ENCODE measurements at regions of chr7 and their contacts with region 1.

Region 1: GRCh38 chr7:158824028-158824427 is 5.3 kb downstream of the ESYT2 start:
- DNase-seq: peak; percentile 67
- H3K4me3 Mint-ChIP-seq: peak overlapping the region; percentile 33
- H3K27ac Mint-ChIP-seq: peak overlapping the region; percentile 87
- H3K4me1 Mint-ChIP-seq: peaks cover 61% of the 10 kb centered on the region
- H3K27me3 Mint-ChIP-seq: no peaks in the 10 kb centered on the region

Region 2: DNA sequence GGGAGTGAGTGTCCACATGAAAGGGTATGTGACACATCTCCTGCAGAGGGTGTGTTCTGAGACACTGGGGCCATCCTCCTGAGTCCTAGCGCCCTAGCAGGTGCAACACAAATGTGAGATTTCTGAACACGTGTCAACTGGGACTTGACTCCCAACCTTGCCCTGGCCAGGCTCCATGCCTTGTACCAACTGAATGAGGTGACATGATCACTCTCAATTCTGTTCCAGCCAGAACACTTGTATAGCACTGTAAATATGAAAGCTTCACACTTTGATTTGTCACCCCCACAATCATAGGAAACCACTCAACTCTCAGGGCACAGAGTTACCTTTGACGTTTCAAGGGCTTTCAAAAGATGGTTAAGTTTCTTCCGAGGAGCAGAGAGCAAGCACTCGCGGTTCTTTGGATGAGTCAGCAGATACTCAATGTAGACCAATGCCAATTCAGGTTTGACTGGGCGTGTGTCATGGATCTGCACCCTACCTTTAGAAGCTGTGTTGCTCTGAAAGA is 168.0 kb before region 1 on chr7:
- intact Hi-C with region 1: loop called (anchors 5 kb)
- DNase-seq: peak; percentile 66
- H3K4me3 Mint-ChIP-seq: no peak overlapping the region
- H3K27ac Mint-ChIP-seq: peak overlapping the region; percentile 88
- H3K4me1 Mint-ChIP-seq: peaks cover 31% of the 10 kb centered on the region
- H3K27me3 Mint-ChIP-seq: no peaks in the 10 kb centered on the region

Region 3: DNA sequence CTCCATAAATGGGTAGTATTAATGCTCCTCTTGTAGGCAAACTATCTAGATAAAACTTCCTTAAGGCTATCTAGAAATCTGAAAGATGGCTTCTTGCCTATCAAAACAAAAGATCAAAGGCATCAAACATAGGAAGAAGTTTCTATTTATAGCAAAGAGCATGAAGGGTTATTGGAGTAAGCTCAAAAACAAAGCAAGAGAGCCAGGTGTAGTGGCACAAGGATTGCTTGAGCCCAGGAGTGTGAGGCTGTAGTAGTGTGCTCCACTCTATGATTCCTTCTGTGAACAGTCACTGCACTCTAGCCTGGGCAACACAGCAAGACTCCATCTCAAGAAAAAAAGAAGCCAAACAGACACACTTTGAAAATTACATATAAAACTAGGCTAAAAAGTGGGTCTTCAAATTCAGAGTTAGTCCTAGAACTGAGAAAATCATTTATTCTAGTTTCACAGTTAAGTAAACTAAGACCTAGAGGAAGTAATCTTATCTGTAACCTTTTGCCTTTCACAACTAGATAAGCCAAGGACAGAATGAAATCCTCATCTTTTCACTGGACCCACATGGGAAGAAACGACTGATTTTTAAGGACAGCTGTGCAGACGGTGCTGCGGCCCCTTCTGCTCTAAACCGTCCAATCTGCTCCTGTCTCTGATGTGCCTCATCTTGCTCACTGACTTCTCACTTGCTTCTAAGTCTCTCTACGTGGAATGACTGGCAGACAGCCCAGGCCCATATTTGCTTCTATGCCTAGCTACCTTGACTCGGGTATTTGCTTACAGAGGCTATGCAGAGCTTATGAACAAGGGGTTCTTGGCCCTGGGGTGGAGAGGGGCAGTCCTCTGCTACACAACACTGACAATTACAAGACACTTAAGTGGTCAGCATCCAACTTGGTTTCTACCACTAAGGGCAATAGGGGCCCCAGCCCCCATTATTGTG is 44.7 kb before region 1 on chr7:
- intact Hi-C with region 1: loop called (anchors 5 kb)
- DNase-seq: no peak
- H3K4me3 Mint-ChIP-seq: no peak overlapping the region
- H3K27ac Mint-ChIP-seq: peak overlapping the region; percentile 50
- H3K4me1 Mint-ChIP-seq: peaks cover 46% of the 10 kb centered on the region
- H3K27me3 Mint-ChIP-seq: no peaks in the 10 kb centered on the region

Region 4: DNA sequence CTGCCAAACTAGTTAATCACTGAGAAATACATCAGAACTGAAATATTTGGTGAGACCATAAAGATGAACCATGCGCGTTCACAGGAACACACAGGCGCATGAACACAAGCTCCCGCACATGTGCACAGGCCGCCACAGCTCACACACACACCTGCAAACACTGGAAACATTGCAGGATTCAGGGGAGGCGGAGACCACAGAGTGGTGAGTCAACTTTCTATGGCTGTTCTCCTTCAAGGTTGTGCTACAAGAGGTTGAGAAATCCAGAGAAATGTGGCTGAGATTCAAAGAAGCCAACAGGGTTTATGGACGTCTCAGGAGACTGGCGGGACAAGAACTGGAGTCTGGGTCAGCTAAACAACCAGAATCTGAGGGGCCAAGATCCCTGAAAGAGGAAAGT is 12.6 kb before region 1 on chr7:
- intact Hi-C with region 1: loop called (anchors 2 kb)
- DNase-seq: no peak
- H3K4me3 Mint-ChIP-seq: peak overlapping the region; percentile 51
- H3K27ac Mint-ChIP-seq: peak overlapping the region; percentile 84
- H3K4me1 Mint-ChIP-seq: peaks cover 67% of the 10 kb centered on the region
- H3K27me3 Mint-ChIP-seq: no peaks in the 10 kb centered on the region